H1 (cell line): ENCODE measurements at regions of chr17 and their contacts with region 1.

Region 1: DNA sequence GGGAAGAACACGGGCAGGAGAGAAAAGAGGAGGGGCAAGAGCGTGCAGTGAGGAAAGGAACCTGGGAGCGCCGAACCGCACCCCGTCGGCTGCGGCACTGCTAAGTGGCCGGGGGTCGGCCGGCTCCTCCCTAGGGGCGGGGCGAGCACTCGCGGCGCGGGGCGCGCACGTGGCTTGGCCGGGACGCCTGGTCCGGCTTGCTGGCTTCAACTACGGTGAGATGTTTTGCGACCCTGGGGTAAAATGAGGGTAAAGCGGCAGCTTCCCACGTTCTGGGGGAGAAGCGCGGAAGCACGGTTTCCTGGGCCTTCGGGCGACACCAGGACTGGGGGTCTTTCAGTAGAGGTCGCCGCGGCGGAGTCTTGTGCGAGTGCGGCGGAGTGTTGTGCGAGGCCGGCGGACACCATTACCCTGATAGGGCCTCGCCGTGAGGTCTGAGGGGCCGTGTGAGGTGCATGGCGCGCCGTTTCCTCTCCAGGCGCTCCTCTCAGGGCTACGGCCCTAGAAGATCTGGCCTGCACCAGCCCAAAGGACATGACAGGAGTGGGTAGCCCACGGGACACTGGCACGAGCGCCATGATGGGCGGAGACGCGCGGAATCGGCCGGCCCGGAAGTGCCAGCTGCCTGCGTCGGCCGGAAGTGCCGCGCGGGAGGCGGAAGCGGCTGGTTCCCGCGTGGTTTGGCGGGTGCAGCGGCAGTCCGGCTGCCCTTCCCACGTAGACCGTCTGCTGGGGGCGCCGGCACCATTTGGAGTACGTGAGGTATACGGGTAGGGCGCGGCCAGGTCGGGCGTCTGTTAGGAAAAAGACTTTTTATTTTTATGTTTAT is at the starts of genes MYO19 and PIGW:
- DNase-seq: peak; percentile 87 to 93
- H3K4me3 ChIP-seq: peak within 1 kb of the TSS; percentile 84 to 96 (median 87)
- H3K27ac ChIP-seq: peak within 1 kb of the TSS; percentile 95
- H3K4me1 ChIP-seq: peaks cover 3 to 6% (median 5%) of the 10 kb centered on the region in 4 experiments; a peak in 4 of 7 replicates
- H3K27me3 ChIP-seq: no peaks in the 10 kb centered on the region
- CTCF ChIP-seq: no peak
- EP300 ChIP-seq: no peak
- POLR2A ChIP-seq: peak; percentile 83 to 93
- RAD21 ChIP-seq: no peak
- total RNA-seq, gene MYO19: 122 and 126 TPM in 2 replicates
- total RNA-seq, gene PIGW: 27.1 and 28.9 TPM in 2 replicates

Region 2: GRCh38 chr17:36475346-36475970 is 59.6 kb before region 1 on chr17:
- CTCF ChIA-PET with region 1: no interaction called
- POLR2A ChIA-PET with region 1: no interaction called
- DNase-seq: no peak
- H3K4me3 ChIP-seq: no peak overlapping the region
- H3K27ac ChIP-seq: no peak overlapping the region
- H3K4me1 ChIP-seq: no peaks in the 10 kb centered on the region
- H3K27me3 ChIP-seq: peaks cover 0 to 4% (median 0%) of the 10 kb centered on the region in 4 experiments; a peak in 2 of 7 replicates
- CTCF ChIP-seq: no peak
- EP300 ChIP-seq: no peak
- POLR2A ChIP-seq: no peak
- RAD21 ChIP-seq: no peak

Region 3: DNA sequence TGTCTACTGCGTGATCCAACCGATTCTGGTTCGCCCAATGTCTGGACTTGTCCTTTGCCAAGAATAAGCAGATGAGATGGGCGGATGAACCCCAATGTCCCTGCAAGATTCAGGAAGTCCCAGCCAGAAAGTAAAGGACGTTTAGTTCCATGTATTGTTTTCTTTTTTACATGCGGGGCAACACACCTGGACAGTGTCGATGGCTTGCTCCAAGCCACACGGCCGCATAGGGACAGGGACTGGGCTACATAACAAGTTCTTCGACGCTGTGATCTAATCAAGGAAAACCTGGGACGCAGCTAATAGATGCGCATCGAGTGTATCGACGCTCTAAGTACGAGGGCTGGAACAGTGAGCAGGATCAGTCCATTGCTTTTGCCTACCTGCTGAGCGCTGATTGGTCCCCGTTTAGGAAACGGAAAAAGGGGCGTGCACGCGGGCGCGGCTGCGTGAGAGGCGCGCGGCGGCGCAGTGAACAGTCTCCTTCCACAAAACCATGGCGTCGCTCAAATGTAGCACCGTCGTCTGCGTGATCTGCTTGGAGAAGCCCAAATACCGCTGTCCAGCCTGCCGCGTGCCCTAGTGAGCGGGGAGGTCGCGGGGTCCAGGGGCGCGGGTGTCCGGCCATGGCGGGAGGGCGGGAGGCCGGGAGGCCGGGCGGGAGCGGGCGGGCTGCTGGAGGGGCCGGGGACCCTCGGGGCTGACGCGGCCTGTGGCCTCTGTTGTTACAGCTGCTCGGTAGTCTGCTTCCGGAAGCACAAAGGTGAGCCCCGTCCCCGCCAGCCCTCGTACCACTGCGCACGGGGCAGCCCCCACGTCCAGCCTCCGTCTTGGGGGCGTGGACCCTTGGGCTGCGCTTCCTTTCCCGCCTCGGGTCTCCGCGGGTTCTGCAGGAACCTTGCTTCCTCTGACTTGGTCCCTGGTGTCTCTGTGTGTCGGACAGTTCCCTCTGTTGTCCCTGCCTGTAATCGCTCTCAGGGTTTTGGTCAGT is 48.6 kb before region 1 on chr17 and contains the start of gene ZNHIT3:
- CTCF ChIA-PET with region 1: interaction called, 4 read pairs
- POLR2A ChIA-PET with region 1: interaction called, 19 read pairs
- DNase-seq: peak; percentile 71 to 89
- H3K4me3 ChIP-seq: peak within 1 kb of the TSS; percentile 73 to 88 (median 85)
- H3K27ac ChIP-seq: peak within 1 kb of the TSS; percentile 53
- H3K4me1 ChIP-seq: peaks cover 0 to 11% (median 9%) of the 10 kb centered on the region in 4 experiments; a peak in 5 of 7 replicates
- H3K27me3 ChIP-seq: peaks cover 15 to 31% (median 26%) of the 10 kb centered on the region in 4 experiments
- CTCF ChIP-seq: no peak
- EP300 ChIP-seq: 0 out of 3 replicates have a peak, but pooled peaks of 1 of the 2 experiments have one; percentile 45
- POLR2A ChIP-seq: peak in 1 of 2 experiments; percentile 84; a peak in 2 of 3 replicates
- RAD21 ChIP-seq: no peak
- total RNA-seq, gene ZNHIT3: 59.1 and 60.8 TPM in 2 replicates

Region 4: DNA sequence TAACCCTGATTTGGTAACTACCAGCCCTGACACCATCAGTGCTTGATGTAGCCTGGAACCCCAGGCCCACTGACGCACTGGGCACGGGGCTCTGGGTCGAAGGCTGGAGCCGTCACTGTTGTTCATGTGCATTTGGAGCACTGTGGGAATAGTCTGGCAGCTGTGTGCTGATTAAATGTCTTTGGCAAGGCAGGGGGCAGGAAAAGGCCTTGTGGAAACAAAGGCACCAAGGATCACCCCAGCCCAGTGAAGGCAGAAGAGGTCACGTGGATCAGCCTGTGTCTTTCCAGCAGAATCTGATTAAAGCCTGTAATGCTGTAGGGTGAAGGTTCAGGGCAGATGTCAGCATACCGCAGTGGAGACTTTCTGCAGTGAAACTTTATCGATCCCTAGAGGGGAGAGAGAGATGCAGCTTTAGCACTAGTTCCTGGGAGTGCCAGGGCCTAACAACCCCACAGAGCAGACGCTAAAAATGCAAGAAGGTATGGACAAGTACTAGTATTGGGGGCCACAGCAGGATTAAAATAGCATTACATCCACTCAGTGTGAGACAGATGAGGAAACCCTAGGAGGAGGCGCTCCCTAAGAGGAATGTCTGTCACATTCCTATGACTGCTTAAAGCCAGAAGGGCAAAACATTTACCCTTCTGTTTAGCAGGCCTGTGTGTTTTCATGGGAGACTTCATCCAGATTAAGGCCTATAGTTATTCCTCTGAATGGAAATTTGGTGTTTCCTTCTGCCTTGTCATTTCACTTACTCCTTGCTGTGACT is 38.9 kb before region 1 on chr17:
- CTCF ChIA-PET with region 1: interaction called, 3 read pairs
- POLR2A ChIA-PET with region 1: interaction called, 10 read pairs
- DNase-seq: no peak
- H3K4me3 ChIP-seq: no peak overlapping the region
- H3K27ac ChIP-seq: no peak overlapping the region
- H3K4me1 ChIP-seq: no peaks in the 10 kb centered on the region
- H3K27me3 ChIP-seq: no peaks in the 10 kb centered on the region
- CTCF ChIP-seq: no peak
- EP300 ChIP-seq: no peak
- POLR2A ChIP-seq: no peak; a peak in 1 of 3 replicates
- RAD21 ChIP-seq: no peak

Region 5: DNA sequence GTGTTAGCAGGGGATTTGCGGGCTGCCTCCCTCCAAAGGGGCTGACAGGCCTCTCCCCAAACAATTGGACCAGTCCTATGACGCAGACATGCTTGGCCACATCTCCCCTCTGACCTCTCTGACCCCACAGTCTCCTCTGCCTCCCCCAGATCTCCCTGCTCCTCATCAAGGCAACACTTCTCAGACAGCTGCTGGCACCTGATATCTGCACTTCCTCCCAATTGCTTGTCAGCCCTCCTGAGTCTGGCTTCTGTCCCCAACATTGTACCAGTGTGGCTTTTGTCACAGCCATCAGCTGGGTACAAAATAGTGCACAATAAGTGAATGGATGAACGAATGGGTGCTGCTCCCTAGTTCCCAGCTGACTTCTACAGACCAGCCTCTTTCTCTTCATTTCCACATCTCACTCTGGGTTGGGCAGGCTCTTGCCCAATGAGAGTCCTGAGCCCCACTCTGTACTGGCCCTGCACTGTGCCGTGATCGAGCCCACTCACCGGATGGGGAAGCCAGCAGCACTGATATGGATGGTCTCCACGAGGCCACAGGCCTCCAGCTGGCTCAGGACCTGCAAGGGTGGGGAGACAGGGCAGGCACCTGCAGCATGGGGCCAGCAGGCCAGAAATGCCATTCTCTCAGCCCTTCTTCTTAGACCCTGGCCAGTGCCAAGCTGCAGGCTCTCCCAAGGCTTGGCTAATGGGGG is 31.4 kb before region 1 on chr17:
- CTCF ChIA-PET with region 1: no interaction called
- POLR2A ChIA-PET with region 1: interaction called, 24 read pairs
- DNase-seq: no peak
- H3K4me3 ChIP-seq: no peak overlapping the region
- H3K27ac ChIP-seq: no peak overlapping the region
- H3K4me1 ChIP-seq: no peaks in the 10 kb centered on the region
- H3K27me3 ChIP-seq: no peaks in the 10 kb centered on the region
- CTCF ChIP-seq: no peak
- EP300 ChIP-seq: no peak
- POLR2A ChIP-seq: no peak
- RAD21 ChIP-seq: no peak

Region 6: DNA sequence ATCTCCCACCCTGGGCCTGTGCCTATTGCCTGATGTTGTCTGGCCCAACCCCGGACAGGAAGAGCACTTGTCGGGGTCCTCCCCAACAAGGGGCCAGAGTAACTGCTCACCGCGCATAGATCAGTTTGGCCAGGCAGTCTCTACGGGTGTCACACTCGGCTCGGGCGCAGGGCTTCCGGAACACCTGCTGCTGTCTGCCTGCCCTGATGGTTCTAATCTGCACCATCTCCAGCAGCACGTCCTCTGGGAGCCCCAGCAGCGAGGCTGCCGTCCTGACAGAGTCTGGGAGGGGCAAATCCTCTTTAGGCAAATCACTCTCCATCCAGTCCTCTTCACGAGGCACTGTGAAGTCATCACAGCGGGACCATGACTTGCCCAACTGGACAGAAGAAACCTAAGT is 24.4 kb before region 1 on chr17:
- CTCF ChIA-PET with region 1: no interaction called
- POLR2A ChIA-PET with region 1: interaction called, 89 read pairs
- DNase-seq: no peak
- H3K4me3 ChIP-seq: no peak overlapping the region
- H3K27ac ChIP-seq: no peak overlapping the region
- H3K4me1 ChIP-seq: no peaks in the 10 kb centered on the region
- H3K27me3 ChIP-seq: no peaks in the 10 kb centered on the region
- CTCF ChIP-seq: no peak
- EP300 ChIP-seq: no peak
- POLR2A ChIP-seq: no peak
- RAD21 ChIP-seq: no peak

Region 7: GRCh38 chr17:36545465-36546417 is 10.7 kb after region 1 on chr17:
- CTCF ChIA-PET with region 1: interaction called, 3 read pairs
- POLR2A ChIA-PET with region 1: interaction called, 101 read pairs
- DNase-seq: peak; percentile 94 to 98
- H3K4me3 ChIP-seq: peak overlapping the region; percentile 73 to 95 (median 90)
- H3K27ac ChIP-seq: peak overlapping the region; percentile 78
- H3K4me1 ChIP-seq: peaks cover 0 to 5% (median 1%) of the 10 kb centered on the region in 4 experiments; a peak in 2 of 7 replicates
- H3K27me3 ChIP-seq: no peaks in the 10 kb centered on the region
- CTCF ChIP-seq: no peak
- EP300 ChIP-seq: peak; percentile 57 to 96; a peak in 2 of 3 replicates
- POLR2A ChIP-seq: peak; percentile 64 to 72
- RAD21 ChIP-seq: no peak

Region 8: DNA sequence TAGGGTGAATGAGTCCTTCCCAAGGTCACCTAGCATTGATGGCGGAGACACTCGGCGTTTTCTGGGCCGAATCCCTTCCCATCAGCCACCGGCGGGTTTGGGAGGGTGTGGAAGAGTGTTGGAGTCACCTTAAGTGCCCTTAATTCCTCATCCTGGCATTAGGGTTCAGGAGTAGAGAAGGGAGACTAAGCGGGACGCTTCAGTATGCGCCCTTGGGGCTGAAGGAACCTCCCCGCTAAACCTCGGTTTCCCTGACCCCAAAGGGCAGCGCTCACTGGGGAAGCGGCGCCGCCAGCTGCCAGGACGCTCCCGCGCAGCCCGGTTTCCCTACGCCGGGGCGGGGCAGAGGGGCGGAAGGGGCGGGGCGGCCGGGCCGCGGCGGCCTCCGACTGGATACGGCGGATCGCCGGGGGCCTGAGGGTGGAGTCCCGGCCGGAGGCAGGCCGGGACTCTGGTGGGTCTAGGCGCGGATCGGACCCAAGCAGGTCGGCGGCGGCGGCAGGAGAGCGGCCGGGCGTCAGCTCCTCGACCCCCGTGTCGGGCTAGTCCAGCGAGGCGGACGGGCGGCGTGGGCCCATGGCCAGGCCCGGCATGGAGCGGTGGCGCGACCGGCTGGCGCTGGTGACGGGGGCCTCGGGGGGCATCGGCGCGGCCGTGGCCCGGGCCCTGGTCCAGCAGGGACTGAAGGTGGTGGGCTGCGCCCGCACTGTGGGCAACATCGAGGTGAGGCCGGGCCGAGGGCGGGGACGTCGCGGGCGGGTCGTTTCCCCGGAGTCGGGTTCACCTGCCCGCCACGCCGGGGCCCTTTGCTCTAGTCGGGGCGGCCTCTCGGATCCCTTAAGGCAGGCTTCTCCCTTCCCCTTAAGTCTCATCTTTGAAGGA is 56.6 kb after region 1 on chr17 and contains the start of gene DHRS11:
- CTCF ChIA-PET with region 1: no interaction called
- POLR2A ChIA-PET with region 1: interaction called, 17 read pairs
- DNase-seq: peak; percentile 46 to 91
- H3K4me3 ChIP-seq: peak within 1 kb of the TSS; percentile 52 to 93 (median 76)
- H3K27ac ChIP-seq: peak within 1 kb of the TSS; percentile 67
- H3K4me1 ChIP-seq: peaks cover 0 to 15% (median 11%) of the 10 kb centered on the region in 4 experiments; a peak in 5 of 7 replicates
- H3K27me3 ChIP-seq: no peaks in the 10 kb centered on the region
- CTCF ChIP-seq: no peak
- EP300 ChIP-seq: no peak
- POLR2A ChIP-seq: peak in 1 of 2 experiments; percentile 73; a peak in 2 of 3 replicates
- RAD21 ChIP-seq: no peak
- total RNA-seq, gene DHRS11: 25.1 and 29.5 TPM in 2 replicates